SK-N-SH (cell line): ENCODE measurements at regions of chr22 and their contacts with region 1.

Region 1: DNA sequence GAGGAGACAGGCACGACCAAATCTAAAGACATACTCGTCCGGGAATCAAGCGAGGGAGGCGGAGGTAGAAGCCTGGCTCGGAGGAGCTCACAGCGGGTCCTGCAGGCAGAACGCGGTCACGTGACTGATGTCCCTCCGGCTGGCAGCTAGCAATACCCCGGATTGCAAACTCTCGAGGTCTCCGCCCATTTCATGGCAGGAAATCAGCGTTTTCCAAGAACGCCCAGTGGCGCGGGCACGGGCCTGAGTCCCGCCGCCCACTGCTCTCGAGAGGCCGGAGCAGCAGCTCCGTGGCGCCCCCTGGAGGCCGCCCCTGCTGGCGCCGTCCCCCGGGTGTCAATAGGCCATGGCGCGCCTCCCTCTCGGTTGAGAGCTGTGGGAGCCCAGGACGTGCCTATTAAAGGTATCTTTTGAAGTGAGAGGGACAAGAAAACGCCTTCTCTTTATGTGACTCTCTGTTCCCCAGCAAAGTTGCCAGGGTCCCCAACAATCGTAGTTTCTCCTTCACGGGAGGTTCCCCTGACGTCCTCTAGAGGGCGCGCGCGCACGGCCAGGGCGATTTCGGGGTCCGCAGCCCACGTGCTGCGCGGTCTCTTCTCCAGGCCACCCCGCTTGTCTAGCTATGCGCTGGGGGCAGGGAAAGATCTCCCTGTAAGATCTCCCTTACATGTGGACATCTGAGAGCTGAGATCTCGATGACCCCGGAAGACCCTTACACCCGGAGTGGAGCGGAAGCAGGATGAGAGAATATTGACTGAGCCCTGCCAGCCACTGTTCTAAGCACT is 37.3 kb upstream of the RBFOX2 start:
- DNase-seq: peak; percentile 91
- H3K4me3 ChIP-seq: peak overlapping the region; percentile 47 to 63
- H3K27ac ChIP-seq: peak overlapping the region; percentile 62 to 92
- H3K4me1 ChIP-seq: peaks cover 4 to 20% of the 10 kb centered on the region in 2 experiments; a peak in 3 of 4 replicates
- H3K27me3 ChIP-seq: no peaks in the 10 kb centered on the region
- CTCF ChIP-seq: peak; percentile 100
- EP300 ChIP-seq: peak in 1 of 2 experiments; percentile 5; a peak in 1 of 4 replicates
- RAD21 ChIP-seq: peak; percentile 78

Region 2: DNA sequence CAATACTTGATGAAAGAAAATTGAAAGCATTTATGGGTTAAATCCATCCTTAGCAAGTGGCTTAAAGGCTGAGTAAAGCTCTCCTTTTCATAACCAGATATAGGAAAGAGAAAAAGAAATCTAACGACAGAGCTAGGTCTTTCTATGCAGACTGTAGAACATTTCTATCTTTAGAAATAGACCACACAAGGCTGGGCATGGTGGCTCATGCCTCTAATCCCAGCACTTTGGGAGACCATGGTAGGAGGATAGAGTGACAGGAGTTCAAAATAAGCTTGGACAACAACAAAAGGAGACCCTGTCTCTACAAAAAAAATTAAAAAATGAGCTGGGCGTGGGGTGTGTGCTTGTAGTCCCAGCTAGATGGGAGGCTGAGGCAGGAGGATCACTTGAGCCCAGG is 257.6 kb before region 1 on chr22:
- CTCF ChIA-PET with region 1: no interaction called
- POLR2A ChIA-PET with region 1: no interaction called
- DNase-seq: no peak
- H3K4me3 ChIP-seq: no peak overlapping the region
- H3K27ac ChIP-seq: no peak overlapping the region
- H3K4me1 ChIP-seq: peaks cover 0 to 3% of the 10 kb centered on the region in 2 experiments; a peak in 2 of 4 replicates
- H3K27me3 ChIP-seq: no peaks in the 10 kb centered on the region
- CTCF ChIP-seq: no peak
- EP300 ChIP-seq: no peak
- RAD21 ChIP-seq: no peak

Region 3: GRCh38 chr22:35930933-35931332 is 135.0 kb before region 1 on chr22:
- CTCF ChIA-PET with region 1: interaction called, 147 read pairs
- POLR2A ChIA-PET with region 1: no interaction called
- DNase-seq: peak; percentile 59
- H3K4me3 ChIP-seq: no peak overlapping the region
- H3K27ac ChIP-seq: no peak overlapping the region; a peak in 1 of 4 replicates
- H3K4me1 ChIP-seq: no peaks in the 10 kb centered on the region; a peak in 1 of 4 replicates
- H3K27me3 ChIP-seq: no peaks in the 10 kb centered on the region
- CTCF ChIP-seq: peak; percentile 81
- EP300 ChIP-seq: no peak
- RAD21 ChIP-seq: peak; percentile 96

Region 4: DNA sequence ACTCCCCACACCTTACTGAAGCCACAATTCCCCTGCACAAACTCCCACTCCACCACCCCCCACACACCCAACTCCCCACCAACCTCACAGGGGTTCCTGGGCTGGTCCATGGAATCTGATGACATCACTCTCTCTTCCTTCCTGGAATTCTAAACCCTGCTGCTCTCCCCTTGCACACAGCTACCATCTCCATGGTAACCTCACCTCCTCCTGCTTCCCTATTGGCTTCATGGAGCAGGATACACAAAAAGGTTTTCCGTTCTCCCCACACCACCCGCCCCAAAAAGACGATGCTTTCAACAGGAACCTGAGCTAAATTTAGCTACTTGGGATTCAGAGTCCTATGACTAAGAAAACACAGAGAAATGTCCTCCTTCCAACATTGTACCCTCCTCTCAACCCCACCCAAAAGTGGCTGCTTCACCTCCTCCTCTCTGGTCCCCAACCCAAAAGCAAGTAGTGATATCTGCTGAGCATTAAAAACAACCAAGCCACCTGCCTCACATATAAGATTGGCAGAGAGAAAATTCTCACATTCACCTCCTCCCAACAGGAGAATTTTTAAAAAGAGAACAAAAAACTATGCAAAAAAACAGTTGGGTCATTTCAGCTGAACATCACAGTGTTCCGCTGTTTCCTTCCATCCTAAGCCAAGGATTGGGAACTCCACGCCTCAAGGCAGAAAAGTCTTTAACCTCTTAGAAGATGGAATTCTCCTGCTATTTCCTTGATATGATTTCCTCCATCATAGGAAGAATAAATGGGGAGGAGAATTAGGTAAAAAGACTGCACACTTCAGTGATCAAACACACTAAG is 104.3 kb before region 1 on chr22:
- CTCF ChIA-PET with region 1: interaction called, 44 read pairs
- POLR2A ChIA-PET with region 1: no interaction called
- DNase-seq: peak; percentile 58
- H3K4me3 ChIP-seq: peak overlapping the region; percentile 33 to 50
- H3K27ac ChIP-seq: peak overlapping the region; percentile 85 to 93
- H3K4me1 ChIP-seq: peaks cover 49 to 62% of the 10 kb centered on the region in 2 experiments
- H3K27me3 ChIP-seq: no peaks in the 10 kb centered on the region
- CTCF ChIP-seq: no peak
- EP300 ChIP-seq: peak in 1 of 2 experiments; percentile 49; a peak in 1 of 4 replicates
- RAD21 ChIP-seq: no peak

Region 5: DNA sequence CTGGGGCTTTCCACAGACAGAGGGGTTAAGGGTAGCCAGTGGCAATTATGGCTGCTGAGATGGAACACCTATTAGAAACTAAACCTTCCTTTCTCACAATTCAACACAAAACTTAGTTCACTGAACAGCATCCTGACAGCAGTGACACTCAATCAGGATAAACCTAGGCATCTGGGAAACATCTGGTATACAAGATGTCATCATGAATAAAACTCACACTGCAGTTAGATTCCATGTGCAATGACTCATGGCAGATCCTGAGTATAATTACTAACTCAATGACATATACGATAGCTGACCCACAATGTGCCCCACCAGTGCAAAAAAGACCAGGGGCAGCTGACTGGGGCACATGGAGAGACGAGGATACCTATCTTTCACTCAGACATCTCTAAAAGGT is 55.1 kb before region 1 on chr22:
- CTCF ChIA-PET with region 1: interaction called, 110 read pairs
- POLR2A ChIA-PET with region 1: interaction called, 5 read pairs
- DNase-seq: peak; percentile 66
- H3K4me3 ChIP-seq: no peak overlapping the region
- H3K27ac ChIP-seq: peak overlapping the region; percentile 72 to 96
- H3K4me1 ChIP-seq: peaks cover 52 to 57% of the 10 kb centered on the region in 2 experiments
- H3K27me3 ChIP-seq: no peaks in the 10 kb centered on the region
- CTCF ChIP-seq: no peak
- EP300 ChIP-seq: peak; percentile 96 to 97
- RAD21 ChIP-seq: peak; percentile 19; the same call in 1 of the 2 replicates

Region 6: DNA sequence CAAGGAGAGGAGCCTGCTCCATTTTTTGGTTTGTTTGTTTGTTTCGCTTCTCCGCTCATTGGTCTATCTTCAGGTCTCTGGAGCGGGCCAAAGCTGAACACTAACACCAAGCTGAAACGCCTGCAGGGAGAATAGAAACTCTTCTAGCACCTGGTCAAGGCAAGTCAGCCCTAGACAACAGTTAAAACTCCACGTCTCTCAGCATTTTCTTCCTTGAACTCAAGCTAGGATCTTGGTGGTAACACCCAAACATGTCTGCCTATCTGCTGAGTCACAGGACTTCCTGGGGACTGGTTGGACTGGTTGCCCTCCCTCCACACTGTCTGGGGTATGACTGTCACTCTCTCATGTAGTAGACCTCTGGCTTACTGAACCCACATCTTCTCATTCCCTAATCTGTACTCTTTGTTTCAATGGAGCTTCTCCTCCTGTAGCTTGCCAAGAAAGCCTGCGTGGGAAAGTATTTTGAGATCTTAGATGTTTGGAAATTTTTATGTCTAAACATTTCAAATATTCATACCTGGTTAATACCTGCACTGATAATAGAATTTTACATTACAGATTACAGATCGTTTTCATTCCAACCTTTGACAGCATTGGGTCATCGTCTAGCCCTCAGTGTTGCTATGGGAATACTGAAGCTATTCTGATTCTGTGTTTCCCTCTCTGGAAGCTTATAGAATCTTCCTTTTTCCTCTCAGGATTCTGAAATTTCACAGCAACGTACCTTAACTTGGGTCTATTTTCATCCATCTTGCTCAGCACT is 13.3 kb before region 1 on chr22:
- CTCF ChIA-PET with region 1: interaction called, 54 read pairs
- POLR2A ChIA-PET with region 1: interaction called, 4 read pairs
- DNase-seq: no peak
- H3K4me3 ChIP-seq: no peak overlapping the region
- H3K27ac ChIP-seq: peak overlapping the region in 1 of 2 experiments; percentile 37; a peak in 2 of 4 replicates
- H3K4me1 ChIP-seq: peaks cover 5 to 10% of the 10 kb centered on the region in 2 experiments; a peak in 2 of 4 replicates
- H3K27me3 ChIP-seq: no peaks in the 10 kb centered on the region
- CTCF ChIP-seq: no peak
- EP300 ChIP-seq: no peak
- RAD21 ChIP-seq: no peak

Region 7: GRCh38 chr22:36104988-36105387 is 39.0 kb after region 1 on chr22:
- CTCF ChIA-PET with region 1: interaction called, 14 read pairs
- POLR2A ChIA-PET with region 1: no interaction called
- DNase-seq: no peak
- H3K4me3 ChIP-seq: no peak overlapping the region
- H3K27ac ChIP-seq: no peak overlapping the region
- H3K4me1 ChIP-seq: no peaks in the 10 kb centered on the region; a peak in 1 of 4 replicates
- H3K27me3 ChIP-seq: no peaks in the 10 kb centered on the region
- CTCF ChIP-seq: no peak
- EP300 ChIP-seq: no peak
- RAD21 ChIP-seq: no peak